AG04450 (cell line): ENCODE measurements at regions of chr1 and their contacts with region 1.

Region 1: DNA sequence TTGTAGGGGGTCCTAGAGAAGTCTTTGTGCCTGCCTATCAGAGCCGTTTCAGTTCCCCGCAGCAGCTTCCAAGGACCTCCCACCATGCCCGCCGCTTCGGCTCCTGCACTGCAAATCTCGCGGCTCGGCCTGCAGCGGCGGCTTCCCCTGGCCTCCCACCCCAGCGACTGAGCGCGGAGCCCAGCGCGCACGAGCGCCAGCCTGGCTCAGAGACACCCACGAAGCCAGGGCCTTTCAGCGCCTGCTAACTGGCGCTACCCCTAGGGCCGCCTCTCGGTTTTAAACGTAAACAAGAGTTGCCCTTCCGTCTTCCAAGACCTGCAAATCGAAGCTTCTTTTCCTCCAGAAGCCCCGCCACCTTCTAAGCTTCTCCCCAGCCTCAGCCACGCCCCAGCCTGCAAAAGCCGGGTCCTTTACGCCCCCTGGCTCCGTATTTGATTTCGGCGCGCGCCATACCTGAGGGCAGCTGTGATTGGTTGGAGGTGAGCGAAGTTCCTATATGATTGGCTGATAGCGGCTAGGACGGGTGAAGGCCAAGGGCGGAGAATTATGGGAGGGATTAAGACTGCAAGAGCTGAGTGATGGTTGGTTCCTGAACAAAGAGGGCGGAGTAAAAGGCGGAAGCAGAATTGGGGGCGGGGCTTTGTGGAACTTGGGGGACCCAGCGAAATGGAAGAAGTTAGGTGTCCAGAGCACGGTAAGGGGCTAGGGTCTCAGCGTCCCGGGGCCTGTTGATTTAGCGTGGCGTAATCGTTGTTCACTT is at the start of gene TTF2:
- DNase-seq: peak; percentile 92
- H3K4me3 ChIP-seq: peak within 1 kb of the TSS; percentile 89
- H3K27ac ChIP-seq: peak within 1 kb of the TSS; percentile 42
- H3K27me3 ChIP-seq: no peaks in the 10 kb centered on the region
- CTCF ChIP-seq: peak; percentile 30
- polyA plus RNA-seq, gene TTF2: 10.0 and 12.4 TPM in 2 replicates

Region 2: GRCh38 chr1:116574581-116575291 is 485.1 kb before region 1 on chr1:
- CTCF ChIA-PET with region 1: interaction called, 16 read pairs
- POLR2A ChIA-PET with region 1: no interaction called
- DNase-seq: no peak
- H3K4me3 ChIP-seq: no peak overlapping the region
- H3K27ac ChIP-seq: no peak overlapping the region
- H3K27me3 ChIP-seq: peaks cover 29% of the 10 kb centered on the region
- CTCF ChIP-seq: peak; percentile 97

Region 3: GRCh38 chr1:116724765-116725375 is 335.0 kb before region 1 on chr1:
- CTCF ChIA-PET with region 1: interaction called, 37 read pairs
- POLR2A ChIA-PET with region 1: no interaction called
- DNase-seq: peak; percentile 16
- H3K4me3 ChIP-seq: no peak overlapping the region
- H3K27ac ChIP-seq: no peak overlapping the region
- H3K27me3 ChIP-seq: no peaks in the 10 kb centered on the region
- CTCF ChIP-seq: peak; percentile 73

Region 4: DNA sequence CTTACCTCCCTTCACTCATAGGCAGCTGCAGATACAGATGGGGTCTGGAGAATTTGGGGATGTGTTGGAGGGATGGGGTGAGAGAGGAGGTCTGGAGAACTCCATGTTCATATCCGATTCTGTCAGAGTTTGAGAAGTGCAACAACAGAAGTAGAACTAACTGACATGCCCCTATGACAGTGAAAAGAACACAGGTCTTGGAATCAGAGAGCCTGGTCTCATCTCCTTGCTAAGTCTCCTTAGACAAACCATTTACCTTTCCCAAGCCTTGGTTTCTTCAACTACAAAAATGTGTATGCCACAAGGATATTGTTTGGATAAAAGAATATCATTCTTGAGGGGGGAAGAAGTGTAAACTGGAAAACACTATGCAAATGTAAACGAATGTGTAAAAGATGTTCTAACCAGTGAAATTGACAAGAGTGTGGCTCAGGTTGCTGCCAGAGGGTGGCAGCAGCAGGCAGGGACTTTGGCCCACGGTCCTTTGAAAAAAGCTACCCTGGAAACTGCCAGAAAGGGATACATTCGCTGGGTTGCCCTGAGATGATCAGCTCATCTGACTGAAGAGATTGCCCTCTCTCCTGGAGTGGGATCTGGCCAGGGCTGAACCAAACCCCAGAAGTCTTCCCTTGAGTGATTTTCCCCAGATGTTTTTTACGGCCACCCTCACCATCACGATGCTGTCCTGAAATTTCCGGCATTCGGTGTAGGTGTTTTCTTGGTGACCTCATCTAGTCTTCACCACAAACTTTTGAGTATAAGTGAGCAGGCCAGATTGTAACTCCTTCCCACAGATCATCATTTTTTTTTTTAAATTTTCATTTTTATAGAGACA is 322.6 kb before region 1 on chr1:
- CTCF ChIA-PET with region 1: interaction called, 50 read pairs
- POLR2A ChIA-PET with region 1: no interaction called
- DNase-seq: peak; percentile 3
- H3K4me3 ChIP-seq: no peak overlapping the region
- H3K27ac ChIP-seq: no peak overlapping the region
- H3K27me3 ChIP-seq: no peaks in the 10 kb centered on the region
- CTCF ChIP-seq: peak; percentile 76

Region 5: GRCh38 chr1:116891396-116892079 is 168.3 kb before region 1 on chr1:
- CTCF ChIA-PET with region 1: no interaction called
- POLR2A ChIA-PET with region 1: no interaction called
- DNase-seq: no peak
- H3K4me3 ChIP-seq: no peak overlapping the region
- H3K27ac ChIP-seq: no peak overlapping the region
- H3K27me3 ChIP-seq: peaks cover 2% of the 10 kb centered on the region
- CTCF ChIP-seq: no peak

Region 6: DNA sequence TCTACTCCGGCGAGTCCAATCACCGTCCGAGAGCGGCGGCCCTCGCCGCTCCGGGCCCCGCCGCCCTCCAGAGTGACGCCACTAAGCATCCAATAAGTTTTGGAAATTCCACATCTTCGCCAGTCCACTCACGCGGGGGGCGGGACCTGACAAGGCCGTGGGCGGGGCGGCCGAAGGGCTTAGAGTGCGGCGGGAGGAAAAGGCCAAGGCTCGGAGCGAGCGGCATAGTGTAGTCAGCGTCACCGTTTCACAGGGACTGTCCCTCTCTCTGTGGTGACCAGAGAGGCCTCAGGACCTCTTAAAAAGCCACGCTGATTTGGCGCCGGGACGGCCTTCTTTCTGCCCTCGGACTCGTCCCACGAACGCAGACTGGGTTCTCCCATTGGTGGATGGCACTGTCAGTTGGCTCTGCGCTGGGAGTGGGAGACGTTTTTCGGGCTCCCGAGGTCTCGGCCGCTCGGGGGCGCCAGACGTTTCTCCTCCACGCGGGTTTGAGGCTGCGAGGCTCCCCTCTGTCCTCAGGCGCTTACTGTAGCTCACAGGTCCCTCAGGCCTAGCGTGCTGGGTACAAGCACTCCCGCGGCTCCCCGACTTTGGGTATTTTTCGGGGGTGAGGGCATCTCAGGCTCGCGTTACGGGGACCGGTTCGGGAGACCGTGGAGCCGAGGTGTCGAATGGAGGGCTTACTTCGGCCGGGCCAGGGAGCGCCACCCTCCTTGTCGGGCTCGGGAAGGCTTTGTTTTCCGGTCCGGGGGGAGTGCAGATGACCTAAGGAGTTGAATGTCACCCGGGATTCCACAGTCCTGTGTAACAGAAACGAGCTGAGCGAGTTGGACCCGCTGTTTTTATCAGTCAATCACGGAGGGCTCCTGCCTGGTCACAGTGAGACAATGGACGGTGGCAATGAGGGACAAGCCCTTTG is 62.2 kb after region 1 on chr1:
- CTCF ChIA-PET with region 1: interaction called, 285 read pairs
- POLR2A ChIA-PET with region 1: no interaction called
- DNase-seq: peak; percentile 88
- H3K4me3 ChIP-seq: peak overlapping the region; percentile 87
- H3K27ac ChIP-seq: peak overlapping the region; percentile 91
- H3K27me3 ChIP-seq: peaks cover 10% of the 10 kb centered on the region
- CTCF ChIP-seq: peak; percentile 84